K562 (cell line): ENCODE measurements at regions of chr11 and their contacts with region 1.

Region 1: DNA sequence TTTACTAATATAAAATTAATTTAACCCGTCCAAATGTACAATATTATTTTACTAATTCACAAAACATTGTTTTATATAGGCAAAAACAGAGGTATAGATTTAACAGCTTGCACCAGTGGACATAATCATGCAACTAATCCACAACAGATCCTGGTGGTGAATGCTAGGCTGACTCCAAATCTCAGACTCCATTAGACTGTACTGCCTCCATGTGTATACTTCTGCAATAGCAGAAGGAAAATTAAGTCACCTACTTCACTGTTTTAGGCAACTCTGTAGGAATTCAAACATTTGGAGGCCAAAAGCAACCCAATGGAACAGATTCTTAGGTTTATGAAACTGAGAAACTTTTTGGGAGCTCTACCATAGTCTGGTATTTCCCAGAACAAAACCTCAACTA is 30.0 kb upstream of the RAB39A start:
- DNase-seq: peak in 3 of 4 experiments; percentile 11 to 42 (median 32)
- ATAC-seq: peak; percentile 95
- H3K4me3 ChIP-seq: no peak overlapping the region
- H3K27ac ChIP-seq: no peak overlapping the region
- H3K4me1 ChIP-seq: no peaks in the 10 kb centered on the region
- H3K27me3 ChIP-seq: peaks cover 9 to 18% of the 10 kb centered on the region in 2 experiments; a peak in 4 of 5 replicates
- CTCF ChIP-seq: peak; percentile 63 to 76 (median 72)
- EP300 ChIP-seq: no peak
- POLR2A ChIP-seq: no peak
- RAD21 ChIP-seq: peak; percentile 57 to 85

Region 2: GRCh38 chr11:107741044-107741823 is 157.0 kb before region 1 on chr11:
- CTCF ChIA-PET with region 1: interaction called, 11 read pairs
- POLR2A ChIA-PET with region 1: no interaction called
- in situ Hi-C with region 1: no loop called
- intact Hi-C with region 1: loop called (anchors 2 kb)
- DNase-seq: peak; percentile 19 to 68 (median 35)
- ATAC-seq: peak; percentile 96
- H3K4me3 ChIP-seq: no peak overlapping the region
- H3K27ac ChIP-seq: no peak overlapping the region
- H3K4me1 ChIP-seq: no peaks in the 10 kb centered on the region
- H3K27me3 ChIP-seq: no peaks in the 10 kb centered on the region; a peak in 1 of 5 replicates
- CTCF ChIP-seq: peak; percentile 79 to 87 (median 85)
- EP300 ChIP-seq: no peak
- POLR2A ChIP-seq: no peak
- RAD21 ChIP-seq: peak; percentile 59 to 90